Activated T-helper 1 cell treated with anti-CD3 and anti-CD28 coated beads, Interleukin-12 subunit alpha, Interleukin-12 subunit beta, Interleukin-2, Interleukin-4 antibody, amounts not matched to agents 30 ng/mL and 10 ng/mL and 1 ng/mL, durations not matched to agents 14 hours and 24 hours and 36 hours (primary cell): ENCODE measurements at regions of chr10 and their contacts with region 1.

Region 1: DNA sequence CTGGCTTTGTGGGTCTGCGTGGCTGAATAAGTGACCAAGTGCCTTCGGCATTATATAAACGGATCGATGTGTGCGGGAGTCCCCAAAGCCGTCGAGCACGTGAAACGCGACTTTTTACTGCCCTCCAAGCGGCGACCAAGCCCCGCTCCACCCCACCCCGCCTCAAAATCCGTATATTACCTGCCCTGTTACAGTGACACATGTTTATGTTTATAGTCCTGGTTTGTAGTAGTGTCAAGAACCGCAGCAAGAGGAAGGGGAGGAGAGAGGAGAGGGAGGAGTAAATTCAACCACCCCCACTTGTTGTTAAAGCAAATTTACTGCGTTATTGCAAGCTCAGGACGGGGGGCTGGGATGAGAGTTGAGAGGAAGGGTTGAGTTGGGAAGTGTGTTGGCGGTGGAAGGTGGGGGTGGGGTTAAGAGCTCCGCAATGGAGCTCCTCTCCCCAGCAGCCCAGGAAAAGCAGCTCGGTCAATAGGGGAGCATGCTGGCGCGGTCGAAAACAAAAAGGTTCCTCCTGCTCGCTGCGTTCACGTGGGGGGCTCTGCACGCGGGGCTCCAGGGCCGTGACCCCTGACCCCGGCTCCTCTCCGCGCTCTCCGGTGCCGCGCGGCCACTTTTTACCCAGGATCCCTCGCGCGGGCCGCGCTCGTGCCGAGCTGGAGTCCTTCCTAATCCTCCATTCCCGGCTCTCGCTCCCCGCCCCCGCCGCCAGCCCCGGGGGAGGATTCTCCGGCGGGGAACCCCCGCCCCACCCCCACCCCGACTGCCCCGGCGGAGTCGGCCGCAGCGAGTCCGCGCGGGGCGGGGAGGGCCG is at the start of gene SKIDA1:
- DNase-seq: peak; percentile 51
- H3K4me3 Mint-ChIP-seq: peak within 1 kb of the TSS; percentile 85
- H3K27ac Mint-ChIP-seq: peak within 1 kb of the TSS; percentile 94
- H3K4me1 Mint-ChIP-seq: peaks cover 39% of the 10 kb centered on the region
- H3K27me3 Mint-ChIP-seq: peaks cover 44% of the 10 kb centered on the region
- total RNA-seq, gene SKIDA1: 0.05 and 0.15 TPM in 2 replicates

Region 2: DNA sequence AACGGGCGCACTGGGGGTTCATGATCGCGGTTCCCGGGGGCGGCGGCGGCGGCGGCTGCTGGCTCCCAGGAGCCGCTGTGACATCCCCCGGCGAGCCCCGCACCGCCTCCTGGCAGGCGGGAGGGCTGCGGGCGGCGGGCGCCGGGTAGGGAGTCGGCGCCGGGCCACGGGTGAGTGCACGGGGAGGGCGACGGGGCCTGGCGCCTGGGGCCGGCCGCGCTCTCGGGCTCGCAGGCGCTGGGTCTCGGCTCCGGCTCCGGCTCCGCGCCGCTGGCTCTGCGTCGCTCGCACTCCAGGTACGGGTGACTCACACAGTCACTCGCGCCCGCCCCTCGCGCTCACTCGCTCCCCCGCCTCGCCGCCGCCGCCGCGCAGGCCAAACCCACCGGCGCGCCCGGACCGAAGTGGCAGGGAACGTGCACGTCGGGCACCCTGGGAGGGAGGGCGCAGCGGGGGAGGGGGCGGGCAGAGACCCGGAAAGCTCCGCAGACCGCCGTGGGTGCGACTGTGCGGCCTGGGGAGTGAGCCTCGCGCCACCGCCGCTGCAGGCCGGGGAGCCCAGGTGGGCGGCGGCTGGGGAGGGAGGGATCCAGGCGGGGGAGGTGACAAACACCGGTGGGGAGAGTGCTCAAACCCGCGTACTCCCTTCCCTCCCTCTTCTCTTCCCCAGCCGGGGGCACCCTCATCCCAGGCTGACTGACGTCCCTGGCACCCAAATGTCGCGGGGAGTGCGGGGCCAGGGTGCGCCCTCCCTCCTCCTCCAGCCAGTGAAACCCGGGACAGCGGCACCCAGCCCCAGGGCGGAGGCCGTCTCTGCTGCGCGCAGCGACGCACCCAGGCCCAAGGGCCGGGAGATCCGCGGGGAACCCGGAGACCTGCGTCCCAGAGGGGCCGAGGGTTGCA is 351.5 kb before region 1 on chr10:
- intact Hi-C with region 1: loop called (anchors 10 kb)
- DNase-seq: no peak
- H3K4me3 Mint-ChIP-seq: no peak overlapping the region
- H3K27ac Mint-ChIP-seq: no peak overlapping the region
- H3K4me1 Mint-ChIP-seq: no peaks in the 10 kb centered on the region
- H3K27me3 Mint-ChIP-seq: peaks cover 33% of the 10 kb centered on the region

Region 3: GRCh38 chr10:21943633-21944265 is 418.2 kb after region 1 on chr10:
- intact Hi-C with region 1: no loop called
- DNase-seq: no peak
- H3K4me3 Mint-ChIP-seq: no peak overlapping the region
- H3K27ac Mint-ChIP-seq: no peak overlapping the region
- H3K4me1 Mint-ChIP-seq: peaks cover 22% of the 10 kb centered on the region
- H3K27me3 Mint-ChIP-seq: no peaks in the 10 kb centered on the region

Region 4: DNA sequence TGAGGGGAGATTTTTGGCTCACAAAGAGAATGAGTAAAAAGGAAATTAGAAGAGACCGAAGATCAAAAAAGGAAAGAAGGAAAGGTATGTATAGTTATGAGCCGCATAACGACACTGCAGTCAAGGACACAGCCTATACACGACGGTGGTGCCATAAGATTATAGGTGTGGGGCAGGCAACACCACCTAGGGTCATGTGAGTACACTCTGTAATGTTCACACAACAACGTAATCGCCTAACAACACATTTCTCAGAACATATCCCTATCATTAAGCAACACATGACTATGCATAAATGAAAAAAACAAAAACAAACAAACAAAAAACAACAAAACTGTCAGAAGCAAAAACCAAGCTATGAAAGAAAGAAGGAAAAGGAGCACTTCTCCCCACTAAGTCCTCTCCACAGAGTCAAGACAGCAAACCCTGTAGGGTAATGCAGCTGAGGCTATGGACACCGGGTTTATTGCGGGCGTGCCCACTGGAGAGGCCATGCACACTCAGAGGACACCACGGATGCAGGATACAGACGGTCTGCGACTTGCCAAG is 1143.7 kb after region 1 on chr10:
- intact Hi-C with region 1: no loop called
- DNase-seq: no peak
- H3K4me3 Mint-ChIP-seq: peak overlapping the region; percentile 73
- H3K27ac Mint-ChIP-seq: peak overlapping the region; percentile 89
- H3K4me1 Mint-ChIP-seq: peaks cover 69% of the 10 kb centered on the region
- H3K27me3 Mint-ChIP-seq: no peaks in the 10 kb centered on the region